Transverse colon (tissue), 4 donors: ENCODE measurements at regions of chr3 and their contacts with region 1.

Region 1: DNA sequence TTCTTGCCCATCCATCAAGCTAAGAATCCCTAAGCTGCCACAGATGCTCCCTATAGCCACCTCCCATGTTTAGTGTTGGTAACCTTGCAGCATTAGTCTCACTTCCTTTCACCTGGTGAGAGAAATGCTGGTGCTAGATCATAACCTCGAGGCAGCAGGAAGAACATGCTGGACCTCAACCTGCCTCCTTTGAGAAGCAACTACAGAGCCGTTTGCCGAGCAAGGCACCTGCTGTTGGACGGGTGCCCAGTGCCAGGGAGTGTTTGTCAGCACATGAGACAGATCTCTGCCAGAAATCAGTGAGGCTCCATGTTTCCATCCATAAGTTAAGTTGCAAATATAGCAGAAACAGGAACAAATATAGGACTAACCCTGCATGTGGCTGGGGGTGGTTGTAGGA is 955.7 kb downstream of the TUSC7 start:
- DNase-seq: peak; percentile 17
- H3K4me3 ChIP-seq: no peak overlapping the region
- H3K27ac ChIP-seq: no peak overlapping the region
- H3K4me1 ChIP-seq: no peaks in the 10 kb centered on the region
- H3K27me3 ChIP-seq: no peaks in the 10 kb centered on the region
- CTCF ChIP-seq: no peak
- EP300 ChIP-seq: no peak
- POLR2A ChIP-seq: no peak

Region 2: DNA sequence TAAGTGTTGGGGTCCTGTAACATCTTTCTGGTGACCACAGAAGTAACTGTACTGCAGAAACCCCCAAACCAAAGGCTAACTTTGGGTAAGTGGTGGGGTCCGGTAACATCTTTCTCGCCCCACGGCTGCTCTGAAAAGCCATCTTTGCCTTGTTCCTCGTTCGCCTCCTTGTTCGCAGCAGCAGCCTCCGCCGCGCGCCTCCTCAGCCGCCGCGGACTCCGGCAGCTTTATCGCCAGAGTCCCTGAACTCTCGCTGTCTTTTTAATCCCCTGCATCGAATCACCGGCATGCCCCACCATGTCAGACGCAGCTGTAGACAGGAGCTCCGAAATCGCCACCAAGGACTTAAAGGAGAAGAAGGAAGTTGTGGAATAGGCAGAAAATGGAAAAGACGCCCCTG is 638.9 kb before region 1 on chr3:
- in situ Hi-C with region 1: no loop called
- intact Hi-C with region 1: loop called (anchors 5 kb)
- DNase-seq: no peak
- H3K4me3 ChIP-seq: no peak overlapping the region
- H3K27ac ChIP-seq: no peak overlapping the region
- H3K4me1 ChIP-seq: no peaks in the 10 kb centered on the region
- H3K27me3 ChIP-seq: no peaks in the 10 kb centered on the region
- CTCF ChIP-seq: no peak
- EP300 ChIP-seq: no peak
- POLR2A ChIP-seq: no peak

Region 3: DNA sequence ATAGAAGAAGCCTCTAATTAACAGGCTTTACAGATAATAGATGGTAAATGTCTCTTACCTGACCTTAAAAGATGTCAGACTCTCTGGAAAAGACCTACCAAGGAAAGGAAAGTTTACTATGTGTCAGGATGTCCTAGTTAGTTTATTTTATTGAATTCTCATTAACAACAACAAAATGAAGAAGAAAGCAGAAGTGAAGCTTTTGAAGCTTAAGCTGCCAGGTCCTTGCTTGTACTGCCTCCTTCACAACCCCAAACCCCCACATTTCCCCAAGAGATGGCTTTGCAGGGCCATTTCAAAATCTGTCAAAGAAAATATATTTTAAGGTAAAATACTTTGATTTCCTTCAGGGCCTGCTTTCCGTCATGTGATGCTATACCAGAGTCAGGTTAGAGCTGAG is 157.3 kb before region 1 on chr3:
- in situ Hi-C with region 1: no loop called
- intact Hi-C with region 1: no loop called
- DNase-seq: no peak
- H3K4me3 ChIP-seq: no peak overlapping the region
- H3K27ac ChIP-seq: no peak overlapping the region
- H3K4me1 ChIP-seq: no peaks in the 10 kb centered on the region
- H3K27me3 ChIP-seq: no peaks in the 10 kb centered on the region
- CTCF ChIP-seq: no peak
- EP300 ChIP-seq: no peak
- POLR2A ChIP-seq: no peak

Region 4: GRCh38 chr3:119033393-119034255 is 1368.3 kb after region 1 on chr3:
- in situ Hi-C with region 1: no loop called
- intact Hi-C with region 1: no loop called
- DNase-seq: no peak
- H3K4me3 ChIP-seq: peak overlapping the region in 3 of 4 donors; percentile 46 to 59 (median 58)
- H3K27ac ChIP-seq: peak overlapping the region in 1 of 4 donors; percentile 40
- H3K4me1 ChIP-seq: peaks cover 0 to 9% (median 7%) of the 10 kb centered on the region in 4 donors
- H3K27me3 ChIP-seq: peaks cover 64% of the 10 kb centered on the region
- CTCF ChIP-seq: no peak
- EP300 ChIP-seq: no peak
- POLR2A ChIP-seq: no peak